GM12878 (cell line): ENCODE measurements at regions of chr7 and their contacts with region 1.

Region 1: DNA sequence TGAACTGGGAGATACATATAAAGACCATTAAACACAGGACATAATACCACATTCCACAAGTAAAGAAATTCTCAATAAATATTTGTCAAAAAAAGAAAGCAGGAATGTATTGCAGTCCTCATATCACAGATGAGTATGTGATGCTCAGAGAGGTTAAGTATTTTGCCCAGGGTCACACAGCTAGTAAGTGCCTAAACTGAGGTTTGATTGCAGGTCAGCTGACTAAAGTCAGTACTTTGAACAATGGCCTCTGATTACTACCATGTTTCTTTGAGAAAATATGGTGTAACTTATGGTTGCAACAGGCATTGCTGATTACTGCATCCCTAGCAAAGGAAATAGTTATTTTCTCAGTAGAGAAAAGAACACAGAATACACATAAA is 267.1 kb downstream of the ELMO1 start:
- DNase-seq: no peak
- ATAC-seq: peak; percentile 14; the same call in 2 of the 3 replicates
- H3K4me3 ChIP-seq: no peak overlapping the region
- H3K27ac ChIP-seq: no peak overlapping the region
- H3K4me1 ChIP-seq: no peaks in the 10 kb centered on the region
- H3K27me3 ChIP-seq: no peaks in the 10 kb centered on the region
- CTCF ChIP-seq: no peak
- EP300 ChIP-seq: no peak
- POLR2A ChIP-seq: no peak
- RAD21 ChIP-seq: no peak

Region 2: GRCh38 chr7:36440880-36441279 is 740.7 kb before region 1 on chr7:
- CTCF ChIA-PET with region 1: interaction called, 20 read pairs
- POLR2A ChIA-PET with region 1: no interaction called
- RAD21 ChIA-PET with region 1: interaction called, 10 read pairs
- SMC1A ChIA-PET with region 1: interaction called, 7 read pairs
- in situ Hi-C with region 1: no loop called
- intact Hi-C with region 1: no loop called
- DNase-seq: no peak
- ATAC-seq: no peak
- H3K4me3 ChIP-seq: no peak overlapping the region
- H3K27ac ChIP-seq: no peak overlapping the region
- H3K4me1 ChIP-seq: no peaks in the 10 kb centered on the region
- H3K27me3 ChIP-seq: no peaks in the 10 kb centered on the region
- CTCF ChIP-seq: peak; percentile 15 to 32 (median 23); a peak in 3 of 6 replicates
- EP300 ChIP-seq: no peak
- POLR2A ChIP-seq: no peak
- RAD21 ChIP-seq: peak; percentile 30; the same call in 1 of the 2 replicates

Region 3: DNA sequence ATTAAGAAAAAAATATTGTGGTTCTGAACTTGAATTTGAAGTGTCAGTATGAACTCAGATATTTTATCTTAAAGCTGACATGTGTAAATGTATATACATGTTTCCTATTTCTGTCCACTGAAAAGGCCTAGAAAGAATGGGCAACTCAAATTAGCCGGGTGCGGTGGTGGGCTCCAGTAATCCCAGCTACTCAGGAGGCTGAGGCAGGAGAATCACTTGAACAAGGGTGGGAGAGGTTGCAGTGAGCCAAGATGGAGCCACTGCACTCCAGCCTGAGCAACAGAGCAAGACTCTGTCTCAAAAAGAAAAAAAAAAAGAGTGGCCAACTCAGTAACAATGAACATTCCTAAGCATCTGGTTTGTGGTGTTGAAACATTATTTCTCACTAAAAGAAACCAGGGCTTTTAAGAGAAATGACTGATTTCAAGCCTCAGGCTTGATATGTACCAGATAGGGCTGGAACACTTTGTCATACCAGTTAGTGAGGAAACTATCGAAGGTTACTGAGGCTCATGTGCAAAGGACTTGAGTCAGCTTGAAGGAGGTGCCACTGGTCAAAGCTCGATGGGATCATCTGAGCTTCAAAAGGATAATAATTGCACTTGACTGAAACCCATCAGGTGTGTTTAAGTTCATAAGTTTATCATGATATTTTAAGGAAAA is 497.7 kb before region 1 on chr7:
- CTCF ChIA-PET with region 1: interaction called, 11 read pairs
- POLR2A ChIA-PET with region 1: no interaction called
- RAD21 ChIA-PET with region 1: interaction called, 10 read pairs
- SMC1A ChIA-PET with region 1: interaction called, 10 read pairs
- in situ Hi-C with region 1: no loop called
- intact Hi-C with region 1: no loop called
- DNase-seq: no peak
- ATAC-seq: no peak
- H3K4me3 ChIP-seq: no peak overlapping the region
- H3K27ac ChIP-seq: no peak overlapping the region
- H3K4me1 ChIP-seq: no peaks in the 10 kb centered on the region
- H3K27me3 ChIP-seq: no peaks in the 10 kb centered on the region; a peak in 2 of 4 replicates
- CTCF ChIP-seq: no peak
- EP300 ChIP-seq: no peak
- POLR2A ChIP-seq: no peak
- RAD21 ChIP-seq: no peak

Region 4: GRCh38 chr7:36958111-36958733 is 223.3 kb before region 1 on chr7:
- CTCF ChIA-PET with region 1: interaction called, 6 read pairs
- POLR2A ChIA-PET with region 1: no interaction called
- RAD21 ChIA-PET with region 1: interaction called, 6 read pairs
- SMC1A ChIA-PET with region 1: interaction called, 22 read pairs
- in situ Hi-C with region 1: no loop called
- intact Hi-C with region 1: no loop called
- DNase-seq: no peak
- ATAC-seq: no peak
- H3K4me3 ChIP-seq: no peak overlapping the region
- H3K27ac ChIP-seq: no peak overlapping the region
- H3K4me1 ChIP-seq: peaks cover 30% of the 10 kb centered on the region
- H3K27me3 ChIP-seq: no peaks in the 10 kb centered on the region
- CTCF ChIP-seq: no peak
- EP300 ChIP-seq: no peak
- POLR2A ChIP-seq: no peak
- RAD21 ChIP-seq: no peak

Region 5: DNA sequence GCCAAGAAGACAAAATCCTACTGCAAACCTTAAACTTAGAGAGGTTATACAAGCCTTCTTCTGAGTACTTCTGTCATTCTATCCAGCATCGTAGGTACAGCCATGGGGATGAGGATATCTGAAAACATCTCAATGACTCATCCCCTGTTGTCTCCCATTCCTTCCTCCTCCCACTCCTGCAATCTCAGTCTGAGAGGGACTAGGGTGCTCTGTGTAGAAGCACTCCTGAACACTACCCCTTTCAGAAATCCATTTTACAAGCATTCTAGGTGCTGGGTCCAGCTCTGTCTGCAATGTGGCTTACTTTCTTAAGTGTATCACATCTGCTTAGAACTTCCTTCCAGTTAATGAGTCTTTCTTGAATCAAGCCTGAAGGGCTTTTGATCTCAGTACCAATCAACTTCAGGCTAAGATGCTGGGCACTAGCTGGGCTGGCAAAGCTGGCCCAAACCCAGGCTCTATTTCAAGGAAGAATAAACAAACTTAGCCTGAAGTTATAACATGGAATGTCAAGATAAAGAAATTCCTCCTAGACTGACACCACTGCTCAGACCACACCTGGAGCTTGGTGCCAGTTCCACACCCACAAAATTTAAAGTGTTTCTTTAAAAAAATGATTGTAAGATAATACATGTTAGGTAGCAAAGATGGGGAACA is 187.0 kb before region 1 on chr7:
- CTCF ChIA-PET with region 1: interaction called, 186 read pairs
- POLR2A ChIA-PET with region 1: no interaction called
- RAD21 ChIA-PET with region 1: interaction called, 119 read pairs
- SMC1A ChIA-PET with region 1: interaction called, 104 read pairs
- in situ Hi-C with region 1: loop called (anchors 5 kb)
- intact Hi-C with region 1: no loop called
- DNase-seq: no peak
- ATAC-seq: no peak
- H3K4me3 ChIP-seq: no peak overlapping the region
- H3K27ac ChIP-seq: no peak overlapping the region
- H3K4me1 ChIP-seq: no peaks in the 10 kb centered on the region
- H3K27me3 ChIP-seq: no peaks in the 10 kb centered on the region
- CTCF ChIP-seq: no peak
- EP300 ChIP-seq: no peak
- POLR2A ChIP-seq: no peak
- RAD21 ChIP-seq: no peak

Region 6: GRCh38 chr7:37193087-37193774 is 11.7 kb after region 1 on chr7:
- CTCF ChIA-PET with region 1: interaction called, 39 read pairs
- POLR2A ChIA-PET with region 1: no interaction called
- RAD21 ChIA-PET with region 1: interaction called, 10 read pairs
- SMC1A ChIA-PET with region 1: interaction called, 6 read pairs
- in situ Hi-C with region 1: no loop called
- intact Hi-C with region 1: no loop called
- DNase-seq: no peak
- ATAC-seq: no peak
- H3K4me3 ChIP-seq: no peak overlapping the region
- H3K27ac ChIP-seq: no peak overlapping the region
- H3K4me1 ChIP-seq: no peaks in the 10 kb centered on the region
- H3K27me3 ChIP-seq: no peaks in the 10 kb centered on the region
- CTCF ChIP-seq: no peak
- EP300 ChIP-seq: no peak
- POLR2A ChIP-seq: no peak
- RAD21 ChIP-seq: no peak

Region 7: DNA sequence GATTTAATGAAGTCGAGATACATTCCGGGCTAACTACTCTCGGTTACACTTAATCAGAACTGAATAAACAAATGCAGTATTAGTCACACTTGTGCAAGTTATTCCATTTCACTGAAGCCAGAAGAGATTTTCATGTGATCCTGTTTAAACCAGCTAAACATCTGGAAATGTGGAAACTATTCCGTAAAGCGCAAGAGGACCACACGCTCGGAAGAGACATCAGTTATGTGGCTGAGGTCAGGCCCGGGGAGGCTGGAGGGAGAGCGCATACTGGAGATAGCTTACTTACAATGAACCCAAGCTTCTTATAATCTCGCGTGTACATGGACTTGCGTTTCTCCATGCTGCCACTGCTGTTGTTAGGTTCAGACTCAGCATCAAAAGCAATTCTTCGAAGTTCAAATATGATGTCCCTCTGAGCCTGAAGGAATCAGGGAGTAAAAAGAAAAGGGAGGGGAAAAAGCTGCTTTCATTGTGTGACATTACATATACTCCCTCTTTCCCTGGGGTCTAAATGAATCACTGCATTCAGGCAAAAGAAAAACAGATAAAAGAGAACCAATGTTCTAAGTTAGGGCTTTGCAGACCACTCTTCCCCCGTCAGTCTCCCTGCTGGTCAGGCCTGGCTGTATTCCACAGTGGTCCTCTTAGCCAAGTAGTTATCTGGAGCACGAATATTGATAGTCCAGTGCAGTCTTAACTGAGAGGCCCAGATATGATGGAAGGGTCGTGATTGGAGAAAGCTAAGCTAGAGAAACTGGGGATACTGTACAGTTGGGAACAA is 29.7 kb after region 1 on chr7:
- CTCF ChIA-PET with region 1: no interaction called
- POLR2A ChIA-PET with region 1: no interaction called
- RAD21 ChIA-PET with region 1: no interaction called
- SMC1A ChIA-PET with region 1: no interaction called
- in situ Hi-C with region 1: no loop called
- intact Hi-C with region 1: no loop called
- DNase-seq: no peak
- ATAC-seq: no peak
- H3K4me3 ChIP-seq: no peak overlapping the region
- H3K27ac ChIP-seq: no peak overlapping the region
- H3K4me1 ChIP-seq: peaks cover 19% of the 10 kb centered on the region
- H3K27me3 ChIP-seq: no peaks in the 10 kb centered on the region; a peak in 1 of 4 replicates
- CTCF ChIP-seq: no peak
- EP300 ChIP-seq: no peak
- POLR2A ChIP-seq: no peak
- RAD21 ChIP-seq: no peak